Panc1 (cell line): ENCODE measurements at regions of chr19 and their contacts with region 1.

Region 1: GRCh38 chr19:38964738-38965137 is 10.8 kb downstream of the FBXO17 start:
- DNase-seq: no peak
- ATAC-seq: no peak
- H3K4me3 ChIP-seq: no peak overlapping the region
- H3K27ac ChIP-seq: no peak overlapping the region
- H3K4me1 ChIP-seq: peaks cover 7% of the 10 kb centered on the region
- H3K27me3 ChIP-seq: no peaks in the 10 kb centered on the region
- CTCF ChIP-seq: no peak

Region 2: GRCh38 chr19:38506723-38507550 is 457.8 kb before region 1 on chr19:
- CTCF ChIA-PET with region 1: interaction called, 26 read pairs
- POLR2A ChIA-PET with region 1: no interaction called
- in situ Hi-C with region 1: no loop called
- intact Hi-C with region 1: no loop called
- DNase-seq: peak; percentile 100
- ATAC-seq: peak; percentile 86
- H3K4me3 ChIP-seq: peak overlapping the region; percentile 29 to 64
- H3K27ac ChIP-seq: peak overlapping the region; percentile 58
- H3K4me1 ChIP-seq: peaks cover 8% of the 10 kb centered on the region
- H3K27me3 ChIP-seq: 0 out of 2 replicates have a peak, but pooled peaks cover 3% of the 10 kb centered on the region
- CTCF ChIP-seq: no peak

Region 3: DNA sequence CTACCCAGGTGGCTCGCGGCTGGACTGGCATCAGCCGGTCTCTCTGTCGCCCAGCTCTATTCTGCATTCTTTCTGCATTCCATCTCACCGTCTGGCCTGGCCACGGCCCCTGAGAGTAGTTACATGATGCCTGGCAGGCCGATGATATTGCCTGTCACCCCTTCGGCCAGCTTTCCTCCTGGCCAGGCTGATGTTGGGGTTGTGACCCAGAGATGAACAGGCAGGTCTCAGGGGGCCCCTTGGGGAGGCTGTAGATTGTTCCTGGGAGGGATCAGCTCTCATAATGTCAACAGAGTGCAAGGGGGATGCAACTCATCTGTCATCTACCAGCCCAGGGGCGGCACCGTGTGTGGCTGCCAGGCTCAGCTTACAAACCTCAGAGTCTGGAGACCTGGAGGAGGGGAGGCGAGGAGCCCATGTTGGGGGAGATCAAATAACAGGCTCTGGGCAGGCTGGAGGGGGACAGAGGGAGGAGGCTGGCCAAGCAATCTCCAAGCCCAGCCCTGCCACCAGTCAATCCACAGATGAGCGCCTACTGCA is 24.4 kb after region 1 on chr19:
- CTCF ChIA-PET with region 1: interaction called, 23 read pairs
- POLR2A ChIA-PET with region 1: interaction called, 3 read pairs
- in situ Hi-C with region 1: no loop called
- intact Hi-C with region 1: no loop called
- DNase-seq: no peak
- ATAC-seq: peak; percentile 80
- H3K4me3 ChIP-seq: no peak overlapping the region
- H3K27ac ChIP-seq: peak overlapping the region; percentile 2
- H3K4me1 ChIP-seq: peaks cover 14% of the 10 kb centered on the region
- H3K27me3 ChIP-seq: no peaks in the 10 kb centered on the region
- CTCF ChIP-seq: no peak

Region 4: GRCh38 chr19:39038098-39038497 is 73.4 kb after region 1 on chr19:
- CTCF ChIA-PET with region 1: interaction called, 12 read pairs
- POLR2A ChIA-PET with region 1: no interaction called
- in situ Hi-C with region 1: no loop called
- intact Hi-C with region 1: loop called (anchors 2 kb)
- DNase-seq: no peak
- ATAC-seq: peak; percentile 96
- H3K4me3 ChIP-seq: peak overlapping the region in 1 of 2 experiments; percentile 5; a peak in 2 of 4 replicates
- H3K27ac ChIP-seq: peak overlapping the region; percentile 3; the same call in 1 of the 2 replicates
- H3K4me1 ChIP-seq: peaks cover 11% of the 10 kb centered on the region
- H3K27me3 ChIP-seq: no peaks in the 10 kb centered on the region
- CTCF ChIP-seq: no peak

Region 5: DNA sequence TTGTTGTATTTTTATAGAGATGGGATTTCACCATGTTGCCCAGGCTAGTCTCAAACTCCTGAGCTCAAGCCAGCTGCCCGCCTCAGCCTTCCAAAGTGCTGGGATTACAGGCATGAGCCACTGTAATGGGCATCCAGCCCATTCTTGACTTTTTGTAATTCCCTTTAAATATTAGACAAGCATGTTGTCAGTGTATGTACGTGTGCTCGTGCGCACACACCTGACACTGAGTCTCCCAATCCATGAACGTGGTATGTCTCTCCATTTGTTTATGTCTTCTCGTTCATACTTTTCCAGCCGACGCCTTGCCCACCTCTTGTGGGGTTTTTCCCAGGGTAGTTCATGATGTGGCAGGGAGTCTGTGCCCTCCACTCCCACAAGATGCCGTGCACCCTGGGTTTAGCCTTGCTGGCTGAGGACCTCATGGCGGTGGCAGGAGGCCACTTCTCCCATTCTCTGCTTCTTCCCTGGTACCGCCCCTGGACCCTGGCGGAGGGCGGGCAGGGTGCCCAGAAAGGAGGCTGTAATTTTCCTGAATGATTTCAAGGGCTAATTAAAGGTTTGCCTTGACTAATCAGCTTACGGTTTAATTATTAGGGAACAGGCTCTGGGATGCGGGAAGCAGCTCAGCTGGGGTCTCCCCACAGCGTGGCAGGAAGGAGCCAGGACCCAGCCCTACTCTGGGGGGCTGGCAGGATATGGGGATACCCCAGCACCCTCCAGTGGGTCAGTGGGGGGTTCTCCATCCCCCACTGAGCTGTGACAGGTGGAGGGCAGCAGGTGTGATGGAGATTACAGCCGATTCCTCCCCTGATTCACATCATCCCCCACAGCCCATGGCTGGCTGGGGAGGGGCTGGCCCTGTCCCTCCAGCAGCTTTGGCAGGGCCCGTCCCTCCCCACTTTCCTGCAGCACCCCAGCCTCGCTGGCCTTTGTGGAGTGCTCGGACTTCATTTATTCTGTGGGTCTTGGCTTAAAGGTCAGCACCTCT is 173.8 kb after region 1 on chr19:
- CTCF ChIA-PET with region 1: interaction called, 11 read pairs
- POLR2A ChIA-PET with region 1: no interaction called
- in situ Hi-C with region 1: no loop called
- intact Hi-C with region 1: no loop called
- DNase-seq: no peak
- ATAC-seq: no peak
- H3K4me3 ChIP-seq: no peak overlapping the region
- H3K27ac ChIP-seq: no peak overlapping the region
- H3K4me1 ChIP-seq: peaks cover 44% of the 10 kb centered on the region
- H3K27me3 ChIP-seq: no peaks in the 10 kb centered on the region
- CTCF ChIP-seq: no peak